PC-9 (cell line): ENCODE measurements at regions of chr3 and their contacts with region 1.

Region 1: GRCh38 chr3:59212128-59212779 is 162.4 kb upstream of the CFAP20DC start:
- DNase-seq: peak in 1 of 2 experiments; percentile 46
- H3K4me3 ChIP-seq: no peak overlapping the region
- H3K27ac ChIP-seq: no peak overlapping the region
- H3K4me1 ChIP-seq: no peaks in the 10 kb centered on the region
- H3K27me3 ChIP-seq: no peaks in the 10 kb centered on the region
- CTCF ChIP-seq: peak; percentile 80

Region 2: DNA sequence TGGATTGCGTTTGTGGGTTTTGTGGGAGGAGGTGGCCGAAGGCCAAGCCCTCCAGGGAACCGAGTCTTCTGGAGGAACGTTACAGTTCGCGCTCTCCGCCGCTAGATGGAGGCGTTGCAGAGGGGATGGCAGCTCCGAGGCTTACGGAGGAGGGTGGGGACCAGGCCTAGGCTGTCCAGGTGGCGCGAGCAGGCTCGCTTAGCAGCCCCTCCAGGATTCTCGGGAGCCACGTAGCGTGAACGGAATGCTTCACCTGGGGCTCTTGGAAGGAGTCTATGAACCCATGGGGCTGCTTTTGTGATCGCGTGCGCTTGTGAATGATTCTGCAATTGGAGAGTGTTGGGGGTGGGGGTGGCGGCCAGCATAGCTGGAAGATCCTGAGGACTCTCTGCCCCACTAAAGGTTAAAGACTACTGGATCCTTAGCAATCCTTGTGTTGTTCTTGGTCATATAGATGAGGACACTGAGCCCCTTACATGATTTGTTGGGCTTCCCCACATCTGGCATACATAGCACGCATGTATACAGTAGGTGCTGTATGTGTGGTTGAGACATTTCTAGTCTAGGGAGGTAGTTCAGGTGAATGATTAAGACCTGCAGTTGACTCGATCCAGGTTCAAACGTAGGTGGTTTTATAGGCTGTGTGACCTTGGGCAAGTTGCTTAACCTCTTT is 571.4 kb before region 1 on chr3:
- CTCF ChIA-PET with region 1: no interaction called
- POLR2A ChIA-PET with region 1: no interaction called
- intact Hi-C with region 1: loop called (anchors 10 kb)
- DNase-seq: peak; percentile 69 to 81
- H3K4me3 ChIP-seq: no peak overlapping the region
- H3K27ac ChIP-seq: no peak overlapping the region
- H3K4me1 ChIP-seq: no peaks in the 10 kb centered on the region
- H3K27me3 ChIP-seq: no peaks in the 10 kb centered on the region
- CTCF ChIP-seq: peak; percentile 88

Region 3: DNA sequence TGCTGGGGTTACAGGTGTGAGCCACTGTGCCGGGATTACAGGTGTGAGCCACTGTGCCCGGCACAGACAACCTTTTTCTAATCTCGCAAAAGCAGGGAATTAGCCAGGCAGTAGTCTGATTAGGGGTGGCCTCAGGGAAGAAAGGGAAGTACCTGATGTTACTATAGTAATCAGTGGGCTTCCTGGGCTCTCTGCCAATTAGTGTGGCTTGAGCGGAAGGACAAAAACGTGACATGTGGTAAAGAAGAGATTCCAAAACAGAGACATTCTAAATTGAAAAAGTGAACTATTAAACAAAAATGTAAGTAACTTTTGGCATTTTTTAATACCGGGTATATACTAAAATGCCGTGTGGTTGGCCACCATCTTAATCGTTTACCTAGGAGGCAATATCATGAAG is 210.6 kb before region 1 on chr3:
- CTCF ChIA-PET with region 1: no interaction called
- POLR2A ChIA-PET with region 1: no interaction called
- intact Hi-C with region 1: no loop called
- DNase-seq: no peak
- H3K4me3 ChIP-seq: no peak overlapping the region
- H3K27ac ChIP-seq: no peak overlapping the region
- H3K4me1 ChIP-seq: peaks cover 16% of the 10 kb centered on the region
- H3K27me3 ChIP-seq: no peaks in the 10 kb centered on the region
- CTCF ChIP-seq: no peak

Region 4: GRCh38 chr3:59575113-59576001 is 363.1 kb after region 1 on chr3:
- CTCF ChIA-PET with region 1: no interaction called
- POLR2A ChIA-PET with region 1: no interaction called
- intact Hi-C with region 1: loop called (anchors 2 kb)
- DNase-seq: peak; percentile 50 to 74
- H3K4me3 ChIP-seq: no peak overlapping the region
- H3K27ac ChIP-seq: no peak overlapping the region
- H3K4me1 ChIP-seq: peaks cover 7% of the 10 kb centered on the region
- H3K27me3 ChIP-seq: no peaks in the 10 kb centered on the region
- CTCF ChIP-seq: peak; percentile 97